ENCODE measurements at regions of chr16 and their contacts with region 1.

Region 1: DNA sequence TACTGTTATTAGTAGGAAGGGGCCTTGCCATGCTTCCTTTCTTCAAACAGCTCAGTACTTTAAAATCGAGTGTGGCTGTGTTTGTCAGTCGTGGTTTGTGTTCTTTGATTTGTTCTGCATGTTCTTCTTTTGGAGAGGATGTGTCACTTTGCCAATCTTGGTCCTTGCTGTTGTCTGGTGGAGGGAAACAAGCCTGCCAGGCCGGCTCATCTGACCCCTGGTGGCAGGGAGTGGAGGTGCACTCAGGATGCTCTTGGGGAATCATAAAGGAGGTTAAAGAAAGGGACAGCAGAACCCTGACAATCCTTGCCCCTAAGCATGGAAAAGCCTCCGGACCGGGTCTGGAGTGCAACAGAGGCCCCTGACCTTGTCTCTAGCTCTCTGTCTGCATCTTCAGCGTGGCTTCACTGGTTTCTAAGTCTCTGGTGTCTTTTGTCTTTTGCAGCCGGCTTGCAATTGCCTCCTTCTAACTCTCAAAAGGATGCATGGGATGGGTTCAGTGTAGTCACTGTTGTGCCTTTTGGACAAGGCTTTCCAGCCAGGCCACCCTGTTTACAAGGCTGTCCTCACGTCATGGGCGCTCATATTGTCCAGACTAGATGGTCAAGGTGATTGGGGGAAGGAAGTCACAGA is 135.8 kb downstream of the WWOX start:
- DNase-seq: peak; percentile 72 to 85 (median 80)
- ATAC-seq: peak; percentile 96
- H3K4me3 ChIP-seq: no peak overlapping the region
- H3K27ac ChIP-seq: no peak overlapping the region
- H3K4me1 ChIP-seq: no peaks in the 10 kb centered on the region
- H3K27me3 ChIP-seq: peaks cover 3 to 8% of the 10 kb centered on the region in 2 experiments; a peak in 3 of 5 replicates
- CTCF ChIP-seq: peak; percentile 86 to 93 (median 89)
- EP300 ChIP-seq: no peak
- POLR2A ChIP-seq: no peak
- RAD21 ChIP-seq: peak; percentile 71 to 74

Region 2: GRCh38 chr16:78122774-78123315 is 112.4 kb before region 1 on chr16:
- CTCF ChIA-PET with region 1: interaction called, 11 read pairs
- POLR2A ChIA-PET with region 1: no interaction called
- in situ Hi-C with region 1: no loop called
- intact Hi-C with region 1: loop called (anchors 2 kb)
- DNase-seq: peak; percentile 26 to 37 (median 32)
- ATAC-seq: peak; percentile 90
- H3K4me3 ChIP-seq: no peak overlapping the region
- H3K27ac ChIP-seq: no peak overlapping the region
- H3K4me1 ChIP-seq: no peaks in the 10 kb centered on the region
- H3K27me3 ChIP-seq: no peaks in the 10 kb centered on the region
- CTCF ChIP-seq: peak in 2 of 3 experiments; percentile 34 to 64; a peak in 3 of 6 replicates
- EP300 ChIP-seq: no peak
- POLR2A ChIP-seq: no peak
- RAD21 ChIP-seq: peak; percentile 56 to 60

Region 3: GRCh38 chr16:78461496-78462191 is 226.4 kb after region 1 on chr16:
- CTCF ChIA-PET with region 1: no interaction called
- POLR2A ChIA-PET with region 1: no interaction called
- in situ Hi-C with region 1: no loop called
- intact Hi-C with region 1: loop called (anchors 10 kb)
- DNase-seq: no peak
- ATAC-seq: no peak
- H3K4me3 ChIP-seq: no peak overlapping the region
- H3K27ac ChIP-seq: no peak overlapping the region
- H3K4me1 ChIP-seq: no peaks in the 10 kb centered on the region
- H3K27me3 ChIP-seq: peaks cover 13 to 14% of the 10 kb centered on the region in 2 experiments
- CTCF ChIP-seq: no peak
- EP300 ChIP-seq: no peak
- POLR2A ChIP-seq: no peak
- RAD21 ChIP-seq: no peak

Region 4: GRCh38 chr16:78638371-78638770 is 403.1 kb after region 1 on chr16:
- CTCF ChIA-PET with region 1: no interaction called
- POLR2A ChIA-PET with region 1: no interaction called
- in situ Hi-C with region 1: no loop called
- intact Hi-C with region 1: no loop called
- DNase-seq: no peak
- ATAC-seq: no peak
- H3K4me3 ChIP-seq: no peak overlapping the region
- H3K27ac ChIP-seq: no peak overlapping the region
- H3K4me1 ChIP-seq: no peaks in the 10 kb centered on the region
- H3K27me3 ChIP-seq: peaks cover 29 to 38% of the 10 kb centered on the region in 2 experiments
- CTCF ChIP-seq: no peak
- EP300 ChIP-seq: no peak
- POLR2A ChIP-seq: no peak
- RAD21 ChIP-seq: no peak

Region 5: DNA sequence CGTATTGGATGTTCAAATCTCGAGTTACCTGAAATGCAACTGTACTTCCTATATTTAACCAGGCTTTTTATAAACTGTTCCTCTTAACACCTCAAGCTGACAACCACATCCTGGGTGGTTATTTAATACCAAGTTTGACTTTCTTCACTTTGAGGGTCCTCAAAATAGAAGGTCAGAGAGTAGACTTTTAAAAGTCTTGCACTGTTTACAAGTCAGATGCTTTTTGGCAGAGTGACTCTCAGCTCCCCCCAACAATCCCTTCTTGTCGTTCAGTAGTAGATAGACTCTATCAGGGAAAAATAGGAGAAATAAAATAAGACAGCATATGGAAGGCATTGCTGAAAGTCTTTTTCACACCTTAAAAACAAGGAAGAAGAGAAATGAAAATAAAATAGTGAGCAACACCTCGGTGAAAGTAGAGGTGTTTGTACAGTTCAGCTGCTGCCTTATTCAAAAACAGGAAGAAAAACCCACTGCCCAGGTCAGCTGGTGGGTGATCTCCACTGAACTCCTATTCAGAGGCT is 514.5 kb after region 1 on chr16:
- CTCF ChIA-PET with region 1: no interaction called
- POLR2A ChIA-PET with region 1: no interaction called
- in situ Hi-C with region 1: no loop called
- intact Hi-C with region 1: no loop called
- DNase-seq: no peak
- ATAC-seq: no peak
- H3K4me3 ChIP-seq: no peak overlapping the region
- H3K27ac ChIP-seq: no peak overlapping the region
- H3K4me1 ChIP-seq: no peaks in the 10 kb centered on the region
- H3K27me3 ChIP-seq: 0 out of 5 replicates have a peak, but pooled peaks cover 0 to 4% of the 10 kb centered on the region in 2 experiments
- CTCF ChIP-seq: no peak
- EP300 ChIP-seq: no peak
- POLR2A ChIP-seq: no peak
- RAD21 ChIP-seq: no peak